A673 (cell line): ENCODE measurements at regions of chr3 and their contacts with region 1.

Region 1: GRCh38 chr3:29430558-29430971 is 149.7 kb downstream of the RBMS3 start:
- DNase-seq: peak; percentile 87
- H3K4me3 ChIP-seq: no peak overlapping the region
- H3K27ac ChIP-seq: peak overlapping the region; percentile 70
- H3K4me1 ChIP-seq: peaks cover 31% of the 10 kb centered on the region
- H3K27me3 ChIP-seq: no peaks in the 10 kb centered on the region
- CTCF ChIP-seq: no peak

Region 2: DNA sequence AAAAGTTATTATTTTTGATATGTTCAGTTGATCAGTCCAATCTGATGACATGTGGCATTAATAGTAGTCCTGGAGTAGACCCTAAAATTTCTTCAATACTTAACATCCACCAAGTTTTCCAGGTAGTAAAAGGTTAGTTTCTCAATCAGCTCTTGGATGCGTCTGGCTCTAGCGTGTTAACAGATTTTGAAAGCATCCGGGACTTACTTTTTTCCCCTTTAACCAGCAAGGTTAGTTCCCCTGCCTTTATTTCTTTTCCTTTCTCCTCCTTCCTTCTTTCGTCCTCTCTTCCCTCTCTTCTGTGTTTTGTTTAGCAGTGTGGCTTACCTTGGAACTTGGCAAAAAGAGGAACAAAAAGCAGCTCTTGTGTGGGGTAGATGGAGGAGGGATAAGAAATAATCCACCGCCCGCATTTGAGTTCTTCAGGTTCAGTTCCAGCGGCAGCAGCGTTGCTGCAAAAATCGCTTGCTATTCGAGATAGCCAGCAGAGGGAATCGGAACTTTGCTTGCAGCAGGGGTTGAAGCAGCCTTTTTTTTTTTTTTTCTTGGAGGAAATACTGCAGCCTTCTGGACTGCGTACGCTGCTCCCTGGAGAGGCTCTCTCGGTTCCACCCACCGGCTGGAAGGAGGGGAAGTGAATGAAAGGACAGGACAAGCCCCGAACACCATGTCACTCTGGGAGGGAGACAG is 150.0 kb before region 1 on chr3 and contains the start of gene RBMS3:
- CTCF ChIA-PET with region 1: no interaction called
- POLR2A ChIA-PET with region 1: no interaction called
- intact Hi-C with region 1: no loop called
- DNase-seq: peak; percentile 97
- H3K4me3 ChIP-seq: peak within 1 kb of the TSS; percentile 59
- H3K27ac ChIP-seq: peak within 1 kb of the TSS; percentile 67
- H3K4me1 ChIP-seq: peaks cover 20% of the 10 kb centered on the region
- H3K27me3 ChIP-seq: no peaks in the 10 kb centered on the region
- CTCF ChIP-seq: peak; percentile 66
- total RNA-seq, gene RBMS3: 5.9 and 7.9 TPM in 2 replicates

Region 3: GRCh38 chr3:29384640-29385039 is 45.9 kb before region 1 on chr3:
- CTCF ChIA-PET with region 1: no interaction called
- POLR2A ChIA-PET with region 1: no interaction called
- intact Hi-C with region 1: no loop called
- DNase-seq: peak; percentile 30
- H3K4me3 ChIP-seq: no peak overlapping the region
- H3K27ac ChIP-seq: no peak overlapping the region
- H3K4me1 ChIP-seq: no peaks in the 10 kb centered on the region
- H3K27me3 ChIP-seq: no peaks in the 10 kb centered on the region
- CTCF ChIP-seq: no peak

Region 4: DNA sequence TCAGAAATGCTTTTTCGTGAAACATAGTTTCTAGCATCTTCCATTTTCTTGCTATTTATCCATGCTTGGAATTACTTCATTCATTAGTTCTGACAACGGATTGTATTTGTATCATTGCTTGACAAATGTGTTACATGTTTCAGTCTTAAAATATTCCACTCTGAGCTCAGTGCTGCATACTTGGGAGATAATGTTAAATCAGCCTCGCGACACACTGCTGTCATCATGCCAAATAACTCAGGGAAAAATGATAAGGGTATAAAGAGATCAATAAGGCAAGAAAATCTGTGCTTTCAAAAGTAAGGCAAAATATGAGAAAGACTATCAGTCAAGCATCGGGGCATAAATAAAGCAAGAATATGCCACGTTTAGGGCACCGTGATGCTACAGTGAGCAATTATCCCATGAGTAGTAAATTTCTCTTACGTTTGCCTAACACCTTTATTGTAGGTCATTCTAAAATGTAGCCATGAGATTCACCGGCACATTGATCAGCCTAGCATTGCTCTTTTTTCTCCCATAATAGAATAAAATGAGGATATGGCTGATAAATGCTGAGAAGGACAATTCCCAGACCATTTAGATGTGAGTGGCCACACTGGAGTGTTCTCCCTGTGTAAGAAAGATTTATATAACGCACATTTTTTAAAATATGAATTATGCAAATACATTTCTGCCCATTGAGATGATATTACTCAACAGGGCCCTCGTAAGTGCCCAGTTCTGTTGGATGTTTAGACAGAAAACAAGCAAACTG is 15.9 kb before region 1 on chr3:
- CTCF ChIA-PET with region 1: no interaction called
- POLR2A ChIA-PET with region 1: no interaction called
- intact Hi-C with region 1: no loop called
- DNase-seq: no peak
- H3K4me3 ChIP-seq: no peak overlapping the region
- H3K27ac ChIP-seq: no peak overlapping the region
- H3K4me1 ChIP-seq: peaks cover 27% of the 10 kb centered on the region
- H3K27me3 ChIP-seq: no peaks in the 10 kb centered on the region
- CTCF ChIP-seq: no peak

Region 5: GRCh38 chr3:29668728-29669127 is 238.2 kb after region 1 on chr3:
- CTCF ChIA-PET with region 1: no interaction called
- POLR2A ChIA-PET with region 1: no interaction called
- intact Hi-C with region 1: no loop called
- DNase-seq: no peak
- H3K4me3 ChIP-seq: no peak overlapping the region
- H3K27ac ChIP-seq: no peak overlapping the region
- H3K4me1 ChIP-seq: no peaks in the 10 kb centered on the region
- H3K27me3 ChIP-seq: no peaks in the 10 kb centered on the region
- CTCF ChIP-seq: peak; percentile 50

Region 6: GRCh38 chr3:29759411-29760225 is 329.1 kb after region 1 on chr3:
- CTCF ChIA-PET with region 1: no interaction called
- POLR2A ChIA-PET with region 1: no interaction called
- intact Hi-C with region 1: loop called (anchors 5 kb)
- DNase-seq: peak; percentile 78
- H3K4me3 ChIP-seq: peak overlapping the region; percentile 23
- H3K27ac ChIP-seq: peak overlapping the region; percentile 77
- H3K4me1 ChIP-seq: peaks cover 67% of the 10 kb centered on the region
- H3K27me3 ChIP-seq: no peaks in the 10 kb centered on the region
- CTCF ChIP-seq: no peak